GM12878 (cell line): ENCODE measurements at regions of chr2 and their contacts with region 1.

Region 1: DNA sequence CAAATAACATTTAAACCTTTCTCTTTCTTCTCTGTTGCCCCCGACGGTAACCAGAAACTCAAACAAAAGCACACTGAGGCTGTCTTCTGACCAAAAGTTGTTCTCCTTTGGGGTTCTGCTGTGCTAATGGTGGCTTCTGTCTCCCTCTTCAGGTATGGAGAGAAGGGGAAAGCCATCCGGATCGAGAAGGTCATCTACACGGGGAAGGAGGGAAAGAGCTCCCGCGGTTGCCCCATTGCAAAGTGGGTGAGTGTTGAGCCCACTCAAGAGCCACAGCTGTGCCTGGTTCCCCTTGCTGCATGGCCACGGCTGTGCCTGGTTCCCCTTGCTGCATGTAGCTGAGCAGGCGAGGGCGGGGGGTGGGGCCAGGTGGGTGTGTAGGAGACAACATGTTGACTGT is 67.4 kb downstream of the BOLA3 start:
- DNase-seq: no peak
- ATAC-seq: peak; percentile 39
- H3K4me3 ChIP-seq: no peak overlapping the region
- H3K27ac ChIP-seq: peak overlapping the region; percentile 57
- H3K4me1 ChIP-seq: peaks cover 17% of the 10 kb centered on the region
- H3K27me3 ChIP-seq: no peaks in the 10 kb centered on the region
- CTCF ChIP-seq: peak; percentile 23 to 58 (median 28); a peak in 4 of 6 replicates
- EP300 ChIP-seq: peak in 1 of 2 experiments; percentile 7; a peak in 1 of 4 replicates
- POLR2A ChIP-seq: peak; percentile 30; the same call in 1 of the 2 replicates
- RAD21 ChIP-seq: peak; percentile 78

Region 2: DNA sequence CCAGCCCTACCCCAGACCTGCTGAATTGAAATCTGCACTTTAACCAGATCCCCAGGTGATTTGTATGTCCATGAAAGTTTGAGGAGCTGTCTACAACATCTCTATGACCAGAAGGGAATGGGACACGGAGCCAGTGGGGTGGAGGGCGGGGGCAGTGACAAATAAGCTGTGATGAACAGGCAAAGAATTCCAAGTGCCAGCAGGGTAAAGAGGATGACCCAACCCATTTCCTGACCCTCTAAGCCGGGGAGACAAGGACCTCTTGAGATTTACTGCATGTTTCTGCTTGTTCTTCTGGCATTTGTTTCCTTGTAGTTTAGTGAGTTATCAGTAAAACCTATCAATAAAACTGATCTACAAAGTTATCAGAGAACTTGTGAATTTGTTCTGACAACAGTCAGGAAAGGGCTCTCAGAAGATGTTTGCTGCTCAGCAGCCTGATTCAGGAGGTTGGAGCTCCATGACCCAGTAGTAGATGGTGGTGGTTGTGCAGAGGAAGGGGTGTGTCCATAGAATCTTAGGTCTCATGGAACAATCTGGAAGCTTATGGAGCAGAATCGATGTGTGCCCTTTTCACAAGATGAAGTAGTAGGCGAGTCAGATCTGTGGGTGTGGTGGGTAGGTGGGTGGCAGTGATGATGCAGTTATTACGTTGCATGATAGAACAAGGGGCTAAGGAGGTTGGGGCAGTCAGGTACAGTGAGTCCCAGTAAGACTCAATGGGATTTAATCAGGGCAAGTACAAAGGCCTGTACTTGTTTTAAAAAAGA is 86.8 kb before region 1 on chr2:
- CTCF ChIA-PET with region 1: interaction called, 16 read pairs
- POLR2A ChIA-PET with region 1: interaction called, 3 read pairs
- RAD21 ChIA-PET with region 1: interaction called, 15 read pairs
- SMC1A ChIA-PET with region 1: interaction called, 10 read pairs
- in situ Hi-C with region 1: no loop called
- intact Hi-C with region 1: no loop called
- DNase-seq: no peak
- ATAC-seq: peak; percentile 5
- H3K4me3 ChIP-seq: peak overlapping the region; percentile 21; the same call in 1 of the 2 replicates
- H3K27ac ChIP-seq: no peak overlapping the region; the same call in 1 of the 2 replicates
- H3K4me1 ChIP-seq: peaks cover 27% of the 10 kb centered on the region
- H3K27me3 ChIP-seq: no peaks in the 10 kb centered on the region
- CTCF ChIP-seq: no peak
- EP300 ChIP-seq: no peak
- POLR2A ChIP-seq: no peak
- RAD21 ChIP-seq: no peak

Region 3: DNA sequence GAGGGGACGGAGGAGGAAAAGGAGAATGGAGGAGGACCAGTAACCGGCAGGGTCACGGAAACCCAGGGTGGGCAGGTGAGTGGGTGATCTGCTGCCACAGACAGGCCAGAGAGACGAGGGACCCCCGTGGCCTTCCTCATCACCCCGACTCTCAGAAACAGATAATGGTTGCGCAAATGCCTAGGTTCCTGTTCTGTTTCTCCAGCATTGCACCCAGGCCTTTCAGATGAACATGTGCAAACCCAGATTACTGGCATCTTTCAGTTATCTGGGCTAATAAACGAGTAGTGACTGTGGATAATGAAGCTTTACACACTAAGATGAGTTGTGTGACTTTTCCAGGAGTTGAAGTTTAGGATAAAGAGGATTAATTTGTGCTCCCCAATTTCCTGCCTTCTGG is 49.1 kb before region 1 on chr2:
- CTCF ChIA-PET with region 1: no interaction called
- POLR2A ChIA-PET with region 1: interaction called, 4 read pairs
- RAD21 ChIA-PET with region 1: interaction called, 11 read pairs
- SMC1A ChIA-PET with region 1: interaction called, 16 read pairs
- in situ Hi-C with region 1: no loop called
- intact Hi-C with region 1: no loop called
- DNase-seq: no peak
- ATAC-seq: no peak
- H3K4me3 ChIP-seq: peak overlapping the region; percentile 73
- H3K27ac ChIP-seq: peak overlapping the region; percentile 73
- H3K4me1 ChIP-seq: peaks cover 65% of the 10 kb centered on the region
- H3K27me3 ChIP-seq: no peaks in the 10 kb centered on the region
- CTCF ChIP-seq: no peak
- EP300 ChIP-seq: no peak
- POLR2A ChIP-seq: no peak
- RAD21 ChIP-seq: no peak